ENCODE measurements at regions of chr2 and their contacts with region 1.

Region 1: GRCh38 chr2:120680136-120680761 is 55.4 kb upstream of the GLI2 start:
- DNase-seq: peak; percentile 69 to 81
- ATAC-seq: peak; percentile 75 to 93 (median 76)
- H3K4me3 ChIP-seq: no peak overlapping the region
- H3K27ac ChIP-seq: no peak overlapping the region
- H3K4me1 ChIP-seq: peaks cover 0 to 12% (median 4%) of the 10 kb centered on the region in 9 donors
- H3K27me3 ChIP-seq: peaks cover 0 to 66% (median 36%) of the 10 kb centered on the region in 7 donors
- CTCF ChIP-seq: peak; percentile 28 to 63 (median 55)

Region 2: GRCh38 chr2:119753041-119753929 is 927.0 kb before region 1 on chr2:
- intact Hi-C with region 1: loop called in 1 of 10 experiments (anchors 5 kb)
- DNase-seq: no peak
- ATAC-seq: peak; percentile 36 to 80 (median 70)
- H3K4me3 ChIP-seq: no peak overlapping the region
- H3K27ac ChIP-seq: no peak overlapping the region
- H3K4me1 ChIP-seq: peaks cover 0 to 23% (median 0%) of the 10 kb centered on the region in 9 donors
- H3K27me3 ChIP-seq: no peaks in the 10 kb centered on the region
- CTCF ChIP-seq: peak; percentile 53 to 88 (median 73)

Region 3: DNA sequence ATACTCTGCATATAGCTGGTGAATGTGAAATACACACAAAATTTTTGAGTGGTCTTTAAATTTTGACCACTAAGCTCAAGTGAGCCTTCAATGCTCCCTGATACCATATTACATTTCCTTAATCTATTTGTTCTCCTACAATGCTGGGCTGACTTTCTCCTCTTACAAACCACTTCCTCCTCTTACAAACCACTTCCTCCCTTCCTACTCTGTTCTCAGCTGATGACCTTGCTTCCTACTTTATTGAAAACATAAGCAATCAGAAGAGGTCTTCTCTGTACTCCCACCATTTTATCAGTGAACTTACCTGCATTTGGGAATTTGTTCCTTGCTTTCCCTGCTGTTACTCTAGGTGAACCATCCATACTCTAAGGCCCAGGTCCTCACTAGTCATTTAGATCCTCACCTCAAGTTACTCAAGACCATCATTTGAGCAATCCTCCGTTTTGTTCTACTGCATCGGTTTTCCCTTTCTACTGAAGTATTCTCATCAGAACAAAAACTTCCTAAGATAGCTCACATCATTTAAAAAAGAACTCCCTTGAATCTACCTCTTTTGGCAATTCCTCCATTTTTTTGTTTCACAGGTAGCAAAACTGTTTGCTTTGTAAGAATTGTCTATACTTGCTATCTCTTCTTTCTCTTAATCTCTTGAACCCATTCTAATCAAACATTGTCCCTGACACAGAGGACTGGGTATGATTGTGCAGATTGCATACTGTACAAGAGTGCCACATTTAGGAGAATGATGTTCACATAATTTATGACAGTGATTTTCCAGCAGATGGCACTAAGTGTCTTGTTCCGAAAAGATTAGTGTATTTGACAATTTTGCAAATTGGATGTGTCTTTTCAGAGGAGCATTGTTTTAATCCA is 570.8 kb before region 1 on chr2:
- intact Hi-C with region 1: loop called in 3 of 10 experiments (anchors 5 to 10 kb)
- DNase-seq: peak in 1 of 2 donors; percentile 6
- ATAC-seq: peak in 7 of 8 donors; percentile 15 to 64 (median 51)
- H3K4me3 ChIP-seq: no peak overlapping the region
- H3K27ac ChIP-seq: peak overlapping the region in 1 of 10 donors; percentile 46
- H3K4me1 ChIP-seq: peaks cover 0 to 37% (median 21%) of the 10 kb centered on the region in 9 donors
- H3K27me3 ChIP-seq: peaks cover 0 to 4% (median 0%) of the 10 kb centered on the region in 7 donors
- CTCF ChIP-seq: peak in 8 of 9 donors; percentile 23 to 65 (median 52)

Region 4: DNA sequence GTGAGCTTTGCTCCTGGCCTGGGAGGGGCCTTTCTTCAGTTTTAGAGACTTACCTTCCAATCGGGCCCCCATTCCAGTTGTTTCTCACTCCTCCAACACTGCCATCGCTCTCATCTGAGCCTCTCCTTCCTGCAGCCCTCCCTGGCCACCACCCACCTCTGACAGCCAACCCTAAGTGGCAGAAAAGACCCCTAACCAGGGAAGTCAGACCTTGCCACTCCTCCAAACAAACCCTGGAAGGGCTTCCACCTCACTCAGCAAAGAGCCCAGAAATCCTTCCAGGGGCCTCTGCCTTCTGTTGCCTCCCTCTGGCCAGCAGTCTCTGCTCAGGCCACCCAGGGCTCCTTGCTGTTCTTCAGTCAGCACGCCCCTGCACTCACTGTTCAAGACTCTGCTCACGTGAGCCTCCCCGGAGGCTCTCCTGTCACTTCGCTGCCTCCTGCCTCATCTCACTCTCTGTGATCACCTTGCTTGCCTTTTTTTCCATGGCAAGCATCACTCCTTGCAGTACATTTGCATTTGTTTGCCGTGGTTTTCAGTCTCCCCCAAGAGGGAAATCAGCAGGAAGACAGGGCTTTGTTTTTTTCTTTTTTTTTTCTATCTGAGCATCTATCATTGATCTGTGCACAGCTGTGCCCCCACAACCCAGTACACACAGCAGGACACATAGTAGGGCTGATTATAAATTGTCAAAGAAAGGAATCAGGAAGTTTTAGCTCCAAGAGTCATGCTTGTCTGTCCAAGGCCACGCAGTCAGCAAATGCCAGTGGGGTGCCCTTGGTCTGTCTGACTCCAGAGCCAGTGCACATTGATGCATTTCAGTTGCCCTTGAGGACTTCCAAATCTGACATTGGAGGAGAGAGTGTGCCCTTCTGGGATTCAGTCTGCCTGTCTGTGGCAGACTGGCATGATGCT is 250.4 kb before region 1 on chr2:
- intact Hi-C with region 1: loop called in 1 of 10 experiments (anchors 10 kb)
- DNase-seq: no peak
- ATAC-seq: no peak
- H3K4me3 ChIP-seq: no peak overlapping the region
- H3K27ac ChIP-seq: no peak overlapping the region
- H3K4me1 ChIP-seq: no peaks in the 10 kb centered on the region
- H3K27me3 ChIP-seq: peaks cover 0 to 34% (median 8%) of the 10 kb centered on the region in 7 donors
- CTCF ChIP-seq: no peak

Region 5: GRCh38 chr2:120511947-120512710 is 168.1 kb before region 1 on chr2:
- intact Hi-C with region 1: loop called in 2 of 10 experiments (anchors 5 kb)
- DNase-seq: no peak
- ATAC-seq: peak in 2 of 8 donors; percentile 16 to 50
- H3K4me3 ChIP-seq: no peak overlapping the region
- H3K27ac ChIP-seq: no peak overlapping the region
- H3K4me1 ChIP-seq: peaks cover 0 to 26% (median 6%) of the 10 kb centered on the region in 9 donors
- H3K27me3 ChIP-seq: peaks cover 0 to 18% (median 0%) of the 10 kb centered on the region in 7 donors
- CTCF ChIP-seq: peak in 1 of 9 donors; percentile 21

Region 6: DNA sequence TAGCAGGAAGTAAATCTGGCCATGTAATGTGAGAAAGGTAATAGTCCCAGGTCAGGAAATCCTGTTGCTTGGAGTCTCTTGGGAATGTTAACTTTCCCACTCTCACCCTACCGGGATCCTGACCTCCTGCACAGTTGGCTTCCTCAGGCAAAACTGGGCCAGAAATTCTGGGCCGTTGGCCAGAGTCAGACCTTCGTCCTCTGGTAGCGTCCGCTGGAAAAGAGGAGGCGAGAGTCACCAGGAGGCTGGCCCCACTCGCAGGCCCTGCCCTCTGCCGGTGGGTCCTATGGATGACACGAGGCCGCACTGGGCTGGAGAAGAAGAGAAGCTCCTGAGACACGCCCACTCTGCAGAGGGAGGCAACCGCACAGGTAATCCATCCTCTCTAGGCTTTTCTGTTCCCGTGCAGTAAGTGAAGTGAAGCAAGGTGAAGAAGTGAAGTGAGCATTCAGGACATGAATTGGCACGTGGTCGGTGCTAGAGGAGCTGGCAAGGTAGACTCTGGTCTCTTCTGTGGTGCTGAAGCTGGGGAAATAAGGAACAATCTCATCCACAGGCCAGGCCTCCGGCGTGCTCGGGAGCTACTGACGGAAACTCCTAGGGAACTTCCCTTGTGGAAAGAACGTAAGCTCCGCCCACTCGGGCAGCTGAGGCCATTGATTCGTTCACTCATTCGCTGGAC is 127.3 kb before region 1 on chr2:
- intact Hi-C with region 1: loop called in 2 of 10 experiments (anchors 10 kb)
- DNase-seq: peak; percentile 90 to 94
- ATAC-seq: peak; percentile 92 to 97 (median 96)
- H3K4me3 ChIP-seq: peak overlapping the region in 2 of 10 donors; percentile 2 to 16
- H3K27ac ChIP-seq: peak overlapping the region in 9 of 10 donors; percentile 36 to 84 (median 64)
- H3K4me1 ChIP-seq: peaks cover 10 to 50% (median 39%) of the 10 kb centered on the region in 9 donors
- H3K27me3 ChIP-seq: peaks cover 0 to 4% (median 0%) of the 10 kb centered on the region in 7 donors
- CTCF ChIP-seq: peak; percentile 73 to 93 (median 84)

Region 7: GRCh38 chr2:121356058-121356640 is 675.9 kb after region 1 on chr2:
- intact Hi-C with region 1: loop called in 1 of 10 experiments (anchors 10 kb)
- DNase-seq: no peak
- ATAC-seq: peak in 4 of 8 donors; percentile 29 to 43 (median 36)
- H3K4me3 ChIP-seq: no peak overlapping the region
- H3K27ac ChIP-seq: no peak overlapping the region
- H3K4me1 ChIP-seq: peaks cover 0 to 46% (median 15%) of the 10 kb centered on the region in 9 donors
- H3K27me3 ChIP-seq: no peaks in the 10 kb centered on the region
- CTCF ChIP-seq: peak; percentile 29 to 74 (median 66)

Measured in heart right ventricle (tissue), 16 donors.